Activated CD4-positive, alpha-beta T cell treated with anti-CD3 and anti-CD28 coated beads, Interleukin-2, amount 10 ng/mL, durations not matched to agents 24 days and 14 days (primary cell): ENCODE measurements at regions of chr1 and their contacts with region 1.

Region 1: DNA sequence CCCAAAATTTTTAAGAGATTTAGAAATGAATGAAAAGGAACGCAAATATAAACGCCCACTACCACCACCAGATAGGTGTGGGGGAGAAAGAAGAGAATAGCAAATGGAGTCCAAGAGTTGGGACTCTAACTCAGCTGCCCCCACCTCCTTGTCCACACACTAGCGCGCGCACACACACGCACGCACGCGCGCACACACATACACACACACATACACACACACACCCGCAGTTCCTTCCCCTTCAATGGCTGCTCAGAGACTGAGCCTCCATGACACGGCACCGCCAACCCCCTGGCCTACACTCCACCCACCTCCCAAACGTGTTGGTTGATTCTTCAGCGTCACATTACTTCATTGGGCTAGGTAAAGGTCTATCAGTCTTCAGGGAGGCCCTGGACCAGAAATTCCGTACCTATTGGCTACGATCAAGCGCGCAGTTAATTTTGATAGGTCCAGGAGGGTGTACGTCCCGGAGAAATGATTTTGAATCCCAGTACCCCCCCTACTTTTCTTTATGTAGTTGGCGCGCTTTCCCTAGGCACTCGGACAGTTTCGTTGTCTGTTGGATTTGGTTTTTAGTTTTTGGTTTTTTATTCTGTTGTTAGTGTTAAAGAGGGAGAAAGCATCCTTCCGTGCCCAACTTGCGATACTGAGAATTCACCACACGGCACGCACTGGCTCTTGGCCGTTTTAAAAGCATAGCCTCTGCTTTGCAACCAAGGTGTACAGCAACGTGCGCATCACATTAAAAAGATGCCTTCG is at the start of gene ANP32E:
- DNase-seq: peak; percentile 98
- H3K4me3 Mint-ChIP-seq: no peak within 1 kb of the TSS
- H3K27ac Mint-ChIP-seq: no peak within 1 kb of the TSS
- H3K4me1 Mint-ChIP-seq: peaks cover 16% of the 10 kb centered on the region
- H3K27me3 Mint-ChIP-seq: peaks cover 6% of the 10 kb centered on the region
- total RNA-seq, gene ANP32E: 193 and 201 TPM in 2 replicates

Region 2: DNA sequence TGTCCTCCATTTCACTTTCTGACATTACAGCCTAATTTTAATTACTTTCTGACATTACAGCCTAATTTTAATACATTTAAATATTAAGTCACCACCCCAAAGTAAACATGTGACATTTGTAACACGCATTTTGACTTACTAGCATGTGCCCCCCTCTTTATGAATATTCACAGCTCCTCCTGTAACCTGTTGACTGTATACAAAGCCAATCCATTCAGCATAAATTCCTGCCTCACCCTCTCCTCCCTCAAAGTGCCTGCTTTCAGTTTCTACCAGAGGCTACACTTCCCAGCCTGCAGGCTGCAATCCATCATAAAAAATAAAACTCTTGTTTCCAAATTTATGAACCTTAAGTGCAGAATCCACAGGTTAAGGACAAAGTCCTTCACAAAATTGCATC is 39.6 kb before region 1 on chr1:
- intact Hi-C with region 1: no loop called
- DNase-seq: no peak
- H3K4me3 Mint-ChIP-seq: no peak overlapping the region
- H3K27ac Mint-ChIP-seq: no peak overlapping the region
- H3K4me1 Mint-ChIP-seq: no peaks in the 10 kb centered on the region
- H3K27me3 Mint-ChIP-seq: peaks cover 15% of the 10 kb centered on the region

Region 3: DNA sequence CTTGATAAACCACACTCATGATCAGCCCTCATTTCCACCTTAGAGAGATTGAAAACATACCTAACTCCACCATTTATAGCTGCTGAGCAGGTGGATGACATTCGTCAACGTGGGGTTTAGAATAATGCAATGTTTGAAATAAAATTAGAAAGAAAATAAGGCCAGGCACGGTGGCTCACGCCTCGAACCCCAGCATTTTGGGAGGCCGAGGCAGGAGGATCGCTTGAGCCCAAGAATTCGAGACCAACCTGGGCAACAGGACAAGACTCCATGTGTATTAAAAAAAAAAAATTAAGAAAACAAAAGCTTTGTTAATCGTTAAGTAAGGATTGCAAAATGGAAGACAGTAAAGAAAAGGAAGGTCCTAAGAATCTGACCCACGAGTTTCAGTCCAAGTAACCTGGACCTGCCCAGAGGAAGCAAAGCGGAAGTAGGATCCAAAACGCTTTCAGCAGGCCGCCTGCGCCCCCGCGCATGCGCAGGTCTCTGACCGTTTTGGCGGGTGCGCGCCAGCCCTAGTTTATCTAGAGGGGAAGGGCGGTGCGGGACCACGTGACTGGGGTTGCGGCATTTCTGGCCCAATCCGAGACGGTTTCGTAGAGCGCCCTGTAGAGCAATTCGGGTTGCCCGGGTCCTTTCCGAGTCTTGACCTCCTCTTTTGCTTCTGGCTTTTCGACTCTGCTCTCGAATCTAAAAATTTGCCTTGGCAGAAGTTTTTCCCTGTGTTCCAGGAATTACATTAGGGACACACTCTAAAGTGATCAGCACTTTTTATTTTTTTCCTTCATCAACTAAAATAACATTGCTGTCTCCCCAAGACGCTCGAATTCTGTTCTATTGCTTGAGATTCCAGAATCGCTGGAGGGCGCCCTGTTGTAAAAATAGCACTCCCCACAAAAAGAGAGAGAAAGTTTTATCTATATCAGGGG is 22.6 kb before region 1 on chr1:
- intact Hi-C with region 1: loop called (anchors 1 kb)
- DNase-seq: peak; percentile 97
- H3K4me3 Mint-ChIP-seq: peak overlapping the region; percentile 91
- H3K27ac Mint-ChIP-seq: peak overlapping the region; percentile 96
- H3K4me1 Mint-ChIP-seq: peaks cover 15% of the 10 kb centered on the region
- H3K27me3 Mint-ChIP-seq: peaks cover 5% of the 10 kb centered on the region

Region 4: GRCh38 chr1:150268705-150269403 is 32.8 kb after region 1 on chr1 and contains the start of gene APH1A:
- intact Hi-C with region 1: loop called (anchors 1 kb)
- DNase-seq: peak; percentile 98
- H3K4me3 Mint-ChIP-seq: peak within 1 kb of the TSS; percentile 98
- H3K27ac Mint-ChIP-seq: peak within 1 kb of the TSS; percentile 96
- H3K4me1 Mint-ChIP-seq: peaks cover 31% of the 10 kb centered on the region
- H3K27me3 Mint-ChIP-seq: no peaks in the 10 kb centered on the region
- total RNA-seq, gene APH1A: 101 and 105 TPM in 2 replicates

Region 5: GRCh38 chr1:150281837-150282653 is 46.0 kb after region 1 on chr1 and contains the start of gene CIART:
- intact Hi-C with region 1: loop called (anchors 5 kb)
- DNase-seq: peak; percentile 92
- H3K4me3 Mint-ChIP-seq: peak within 1 kb of the TSS; percentile 85
- H3K27ac Mint-ChIP-seq: peak within 1 kb of the TSS; percentile 87
- H3K4me1 Mint-ChIP-seq: peaks cover 23% of the 10 kb centered on the region
- H3K27me3 Mint-ChIP-seq: peaks cover 6% of the 10 kb centered on the region
- total RNA-seq, gene CIART: 6.0 and 7.5 TPM in 2 replicates

Region 6: DNA sequence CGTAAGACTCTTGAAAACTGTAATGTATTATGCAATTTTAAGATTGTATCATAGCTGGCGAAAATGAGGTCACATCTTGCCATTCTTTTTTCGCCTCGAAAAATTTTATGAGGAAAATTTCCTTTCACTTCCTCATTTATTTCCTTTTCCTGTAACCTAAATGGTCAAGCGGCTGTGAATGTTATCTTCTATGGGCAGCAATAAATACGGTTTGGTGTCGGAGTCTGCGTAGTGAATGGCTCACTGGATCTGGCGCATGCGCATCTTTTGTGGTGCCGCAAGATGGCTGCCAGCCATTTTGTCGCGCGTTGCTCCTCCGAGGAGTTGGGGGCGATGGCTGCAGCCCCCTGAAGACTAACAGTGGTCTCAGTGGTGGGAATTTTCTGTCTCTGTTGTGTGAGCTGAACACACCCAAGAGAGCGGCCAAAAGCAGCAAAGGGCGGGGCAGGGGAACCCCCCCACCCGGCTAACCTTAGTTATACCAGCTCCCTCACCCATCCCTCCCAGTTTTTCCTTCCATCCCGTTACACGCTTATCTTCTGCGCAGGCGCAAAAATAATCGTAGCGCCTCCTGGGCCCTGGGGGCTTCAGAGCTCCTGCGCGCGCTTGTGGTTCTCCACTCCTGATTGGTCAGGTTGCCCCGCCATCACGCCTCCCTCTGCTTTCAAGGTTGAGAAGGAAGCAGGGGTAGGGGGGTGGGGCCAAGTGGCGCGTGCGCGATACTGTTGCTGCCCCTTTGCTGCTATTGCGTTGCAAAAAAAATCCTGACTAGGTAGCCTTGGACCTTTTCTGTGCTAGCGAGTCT is 127.6 kb after region 1 on chr1 and contains the start of gene RPRD2:
- intact Hi-C with region 1: loop called (anchors 1 kb)
- DNase-seq: peak; percentile 100
- H3K4me3 Mint-ChIP-seq: peak within 1 kb of the TSS; percentile 89
- H3K27ac Mint-ChIP-seq: peak within 1 kb of the TSS; percentile 93
- H3K4me1 Mint-ChIP-seq: peaks cover 25% of the 10 kb centered on the region
- H3K27me3 Mint-ChIP-seq: peaks cover 2% of the 10 kb centered on the region
- total RNA-seq, gene RPRD2: 23.7 and 24.6 TPM in 2 replicates

Region 7: DNA sequence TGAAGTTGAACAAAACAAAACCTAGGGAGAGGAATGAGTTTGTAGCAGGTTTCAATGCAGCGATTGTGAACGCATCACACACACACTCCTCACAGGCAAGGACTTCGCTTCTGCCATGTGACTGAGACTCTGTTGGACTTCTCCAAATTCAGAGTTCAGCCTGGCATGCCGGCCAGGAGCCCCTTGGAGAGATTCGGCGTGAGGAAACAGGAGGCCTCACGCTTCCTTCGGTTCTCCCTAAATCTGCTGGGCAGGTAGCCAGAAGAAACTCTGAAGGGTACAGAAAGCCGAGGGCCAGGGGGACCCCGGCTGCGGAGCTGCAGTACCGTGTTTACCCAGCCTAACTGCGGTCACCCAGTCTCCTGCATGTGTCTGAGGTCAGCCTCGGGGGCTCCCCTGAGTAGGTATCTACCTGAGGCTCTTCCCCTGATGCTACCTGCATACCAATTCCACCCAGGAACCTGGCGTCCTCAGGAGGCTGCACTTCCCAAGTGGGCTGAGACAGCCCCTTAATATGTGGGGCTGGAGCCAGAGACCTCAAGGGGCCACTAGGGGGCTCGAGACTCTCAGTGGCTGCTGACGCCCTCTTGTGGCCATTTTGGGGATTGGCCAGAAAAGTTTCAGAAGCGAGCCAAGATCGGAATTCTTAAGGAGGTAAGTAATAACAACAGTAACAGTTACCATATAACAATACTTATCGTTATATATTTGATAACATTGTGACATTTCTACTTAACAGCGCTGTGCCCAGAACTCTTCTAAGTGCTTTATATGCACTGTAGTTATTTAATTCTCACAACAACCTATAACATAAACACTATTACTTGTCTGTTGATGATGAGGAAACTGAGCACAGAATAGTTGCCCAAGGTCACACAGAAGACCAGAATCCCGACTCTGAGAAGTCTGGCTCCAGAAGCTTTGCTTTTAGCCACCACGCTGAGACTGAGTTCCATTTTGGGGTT is 743.3 kb after region 1 on chr1:
- intact Hi-C with region 1: loop called (anchors 10 kb)
- DNase-seq: peak; percentile 97
- H3K4me3 Mint-ChIP-seq: no peak overlapping the region
- H3K27ac Mint-ChIP-seq: peak overlapping the region; percentile 10
- H3K4me1 Mint-ChIP-seq: peaks cover 25% of the 10 kb centered on the region
- H3K27me3 Mint-ChIP-seq: no peaks in the 10 kb centered on the region